ENCODE measurements at regions of chr5 and their contacts with region 1.

Region 1: DNA sequence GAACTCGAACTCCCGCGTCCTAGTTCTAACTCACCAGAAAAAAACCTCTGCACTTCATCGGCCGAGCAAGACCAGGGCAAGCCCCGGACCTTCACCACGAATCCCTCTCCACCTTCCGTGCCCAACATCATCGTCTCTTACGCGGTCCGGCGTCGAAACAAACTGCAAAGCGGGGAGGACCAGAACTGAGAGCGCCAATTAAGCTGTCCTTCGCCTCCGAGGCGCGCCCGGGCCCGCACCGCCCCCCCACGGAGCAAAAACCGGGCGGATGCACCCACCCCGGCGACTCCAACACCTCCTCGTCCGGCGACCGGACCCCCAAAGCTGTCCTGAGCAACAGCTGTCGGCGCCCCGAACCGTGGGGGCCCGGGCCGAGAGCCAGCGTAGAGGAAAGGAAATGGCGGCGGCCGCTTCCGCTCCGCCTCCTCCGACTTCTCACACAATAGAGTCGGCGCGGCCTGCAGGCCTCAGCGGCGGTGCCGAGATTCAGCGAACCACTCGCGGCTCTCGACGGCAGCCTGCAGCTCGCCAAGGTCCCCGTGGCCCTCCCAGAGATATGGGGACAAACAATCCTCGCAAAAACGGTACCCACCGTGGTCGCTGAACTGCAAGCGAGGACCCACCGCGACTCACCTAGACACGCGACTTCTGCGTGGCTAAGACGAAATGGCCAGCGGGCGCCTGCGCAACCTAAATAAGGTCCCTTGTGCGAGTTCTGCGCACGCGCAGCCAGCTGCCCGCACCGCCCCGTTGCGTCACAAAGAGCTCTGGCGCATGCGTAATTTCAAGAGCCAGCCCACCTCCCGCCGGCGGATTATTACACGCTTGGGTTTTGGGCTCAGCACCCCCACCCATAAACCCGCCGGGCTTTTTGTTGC is at the start of gene HNRNPH1:
- DNase-seq: peak; percentile 98 to 99
- ATAC-seq: peak; percentile 77 to 78
- H3K4me3 ChIP-seq: peak within 1 kb of the TSS; percentile 100
- H3K27ac ChIP-seq: peak within 1 kb of the TSS; percentile 98 to 100
- H3K4me1 ChIP-seq: peaks cover 22% of the 10 kb centered on the region
- CTCF ChIP-seq: peak; percentile 34
- EP300 ChIP-seq: no peak
- POLR2A ChIP-seq: peak; percentile 100
- RAD21 ChIP-seq: no peak
- polyA plus RNA-seq, gene HNRNPH1: 511 and 688 TPM in 2 replicates

Region 2: GRCh38 chr5:179559284-179560252 is 63.7 kb before region 1 on chr5:
- CTCF ChIA-PET with region 1: interaction called, 3 read pairs
- POLR2A ChIA-PET with region 1: interaction called, 23 read pairs
- DNase-seq: peak; percentile 99
- ATAC-seq: peak; percentile 99 to 100
- H3K4me3 ChIP-seq: peak overlapping the region; percentile 71
- H3K27ac ChIP-seq: peak overlapping the region; percentile 83 to 90
- H3K4me1 ChIP-seq: peaks cover 11% of the 10 kb centered on the region; the same call in 2 of the 3 replicates
- CTCF ChIP-seq: no peak
- EP300 ChIP-seq: no peak
- POLR2A ChIP-seq: peak; percentile 75
- RAD21 ChIP-seq: no peak

Region 3: DNA sequence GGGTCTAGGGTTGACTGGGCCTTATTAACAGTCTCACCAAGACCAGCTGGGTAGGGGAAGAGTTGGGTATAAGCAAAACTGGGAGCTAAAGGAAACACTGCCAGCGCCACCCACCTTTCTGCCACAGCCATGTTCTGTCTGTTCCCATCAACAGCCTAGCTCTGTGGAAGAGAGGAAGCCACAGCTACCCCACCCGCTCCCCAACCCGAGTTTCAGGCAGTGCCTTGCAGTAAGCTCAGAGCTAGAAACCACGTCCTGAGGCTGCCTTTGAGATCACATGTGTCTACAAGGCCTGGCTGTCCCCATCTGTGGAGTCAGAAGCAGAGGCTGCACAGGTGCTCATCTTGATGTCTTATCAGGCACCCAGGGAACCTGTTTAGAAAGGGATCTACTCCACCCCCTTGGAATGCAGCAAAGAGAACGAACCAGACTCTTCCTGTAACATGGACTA is 15.1 kb before region 1 on chr5:
- CTCF ChIA-PET with region 1: interaction called, 26 read pairs
- POLR2A ChIA-PET with region 1: interaction called, 125 read pairs
- DNase-seq: no peak
- ATAC-seq: peak; percentile 3; a peak in 5 of 6 replicates
- H3K4me3 ChIP-seq: no peak overlapping the region
- H3K27ac ChIP-seq: no peak overlapping the region
- H3K4me1 ChIP-seq: peaks cover 10% of the 10 kb centered on the region; the same call in 2 of the 3 replicates
- CTCF ChIP-seq: no peak
- EP300 ChIP-seq: no peak
- POLR2A ChIP-seq: no peak
- RAD21 ChIP-seq: no peak

Region 4: DNA sequence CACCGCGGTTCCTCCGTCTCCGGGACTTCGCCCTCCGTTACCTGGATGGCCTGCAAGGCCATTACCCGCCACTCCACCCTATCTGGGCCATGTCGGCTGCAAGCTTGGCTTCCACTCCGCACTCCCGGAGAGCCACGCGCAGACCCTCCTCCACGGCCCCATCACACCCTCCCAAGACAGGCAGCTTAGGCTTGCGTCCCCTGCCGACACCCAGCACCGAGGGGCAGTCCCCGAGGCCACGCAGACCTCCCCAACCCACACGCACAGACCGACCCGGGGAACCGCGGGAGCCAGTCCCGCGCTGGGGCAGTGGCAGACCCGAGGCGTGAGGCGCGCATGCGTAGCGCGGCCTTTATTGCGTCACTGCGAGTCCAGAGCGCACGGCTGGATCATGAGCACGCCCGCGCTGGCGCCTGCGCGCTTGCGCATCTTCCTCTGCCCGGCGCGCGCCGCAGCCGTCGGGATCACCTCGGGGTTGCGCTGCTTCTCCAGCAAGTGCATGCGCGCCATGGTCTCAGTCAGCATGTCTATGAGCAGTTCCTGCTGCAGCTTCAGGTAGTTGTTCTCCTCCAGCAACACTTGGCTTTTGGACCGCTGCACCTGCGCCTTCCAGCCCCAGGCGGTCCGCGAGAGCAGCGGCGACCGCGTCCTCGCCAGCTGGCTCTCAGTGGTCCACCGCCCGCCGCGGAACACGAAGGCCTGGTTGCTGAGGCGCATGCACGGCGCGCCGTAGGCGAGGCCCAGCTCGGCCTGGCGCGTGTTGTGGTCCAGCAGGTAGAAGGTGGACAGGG is 55.2 kb after region 1 on chr5:
- CTCF ChIA-PET with region 1: interaction called, 6 read pairs
- POLR2A ChIA-PET with region 1: interaction called, 15 read pairs
- DNase-seq: peak; percentile 89 to 96
- ATAC-seq: peak; percentile 88 to 94
- H3K4me3 ChIP-seq: peak overlapping the region; percentile 74
- H3K27ac ChIP-seq: peak overlapping the region; percentile 90 to 91
- H3K4me1 ChIP-seq: peaks cover 38% of the 10 kb centered on the region
- CTCF ChIP-seq: no peak
- EP300 ChIP-seq: no peak
- POLR2A ChIP-seq: peak; percentile 95
- RAD21 ChIP-seq: no peak

Region 5: DNA sequence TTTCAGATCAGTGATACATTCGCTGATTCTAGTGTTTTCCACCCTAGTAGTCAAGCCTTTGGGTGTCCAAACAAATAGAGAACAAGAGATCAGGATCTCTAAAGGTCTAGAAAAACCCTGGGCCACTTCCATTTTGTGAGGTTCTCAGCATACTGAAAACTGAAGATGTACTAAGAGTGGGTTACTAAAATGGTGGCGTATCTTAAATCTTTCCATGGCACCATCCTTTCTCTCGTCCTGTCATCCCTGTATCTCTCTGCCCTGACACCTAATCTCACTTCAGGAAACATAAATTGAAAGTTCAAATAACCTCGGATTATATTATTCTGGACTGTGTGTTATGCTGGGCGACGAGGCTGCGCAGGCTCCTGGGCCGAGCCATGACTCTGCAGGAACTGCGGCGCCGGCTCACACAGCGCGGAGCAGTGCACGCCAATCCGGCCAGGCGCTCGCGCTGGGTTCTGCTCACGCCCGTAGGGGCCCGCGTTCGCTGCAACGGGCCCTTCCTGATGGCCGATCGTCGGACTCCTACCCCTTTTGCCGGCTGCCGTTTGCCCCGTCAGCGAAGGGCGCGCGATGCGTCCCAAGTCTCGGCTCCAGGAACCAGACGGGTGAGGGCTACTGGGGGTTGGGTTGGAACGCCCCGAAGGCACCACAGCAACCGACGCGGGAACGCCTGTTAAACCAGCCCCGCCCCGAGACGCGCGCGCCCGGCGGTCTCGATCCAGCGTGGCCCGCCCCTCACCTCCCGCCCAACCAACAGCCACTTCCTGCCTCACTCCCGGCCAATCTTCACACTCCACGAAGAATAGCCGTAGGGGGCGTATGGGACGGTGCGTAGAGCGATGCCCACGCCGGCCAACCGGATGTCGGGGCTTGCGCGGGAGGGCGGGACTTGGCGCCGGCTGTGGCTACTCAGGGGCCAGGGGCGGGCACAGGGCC is 75.0 kb after region 1 on chr5:
- CTCF ChIA-PET with region 1: no interaction called
- POLR2A ChIA-PET with region 1: interaction called, 13 read pairs
- DNase-seq: peak; percentile 99
- ATAC-seq: peak; percentile 95
- H3K4me3 ChIP-seq: peak overlapping the region; percentile 97
- H3K27ac ChIP-seq: peak overlapping the region; percentile 98
- H3K4me1 ChIP-seq: peaks cover 12% of the 10 kb centered on the region; the same call in 1 of the 3 replicates
- CTCF ChIP-seq: no peak
- EP300 ChIP-seq: no peak
- POLR2A ChIP-seq: peak; percentile 93
- RAD21 ChIP-seq: 0 out of 5 replicates have a peak, but pooled peaks of 1 of the 2 experiments have one; percentile 14

Region 6: DNA sequence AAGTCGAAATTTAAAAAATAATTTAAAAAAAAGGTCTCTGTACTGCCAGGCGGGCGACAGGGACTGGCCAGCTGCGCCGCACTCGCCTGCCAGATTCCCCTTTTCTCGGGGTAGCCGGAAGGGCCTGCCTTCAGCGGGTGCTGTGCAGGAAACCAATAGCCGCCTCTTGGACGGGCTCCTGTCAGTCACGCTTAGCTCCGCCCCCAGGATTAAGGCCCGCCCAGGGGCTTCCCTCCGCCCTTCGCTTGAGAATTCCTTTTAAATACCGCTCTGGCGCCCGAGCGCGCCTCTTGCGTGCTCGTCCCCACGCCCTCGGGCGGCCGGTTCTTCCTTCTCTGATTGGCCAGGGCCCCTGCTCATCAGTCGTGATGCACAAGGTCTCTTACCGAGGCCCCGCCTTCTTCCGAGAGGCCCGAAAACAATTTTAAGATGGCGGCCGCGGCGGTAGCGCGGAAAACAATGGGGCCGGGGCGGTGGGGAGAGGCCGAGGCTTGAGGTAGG is 109.2 kb after region 1 on chr5 and contains the start of gene MAML1:
- CTCF ChIA-PET with region 1: no interaction called
- POLR2A ChIA-PET with region 1: interaction called, 10 read pairs
- DNase-seq: peak; percentile 94 to 100
- ATAC-seq: peak; percentile 95 to 97
- H3K4me3 ChIP-seq: peak within 1 kb of the TSS; percentile 69
- H3K27ac ChIP-seq: peak within 1 kb of the TSS; percentile 88 to 97
- H3K4me1 ChIP-seq: peaks cover 26% of the 10 kb centered on the region
- CTCF ChIP-seq: no peak
- EP300 ChIP-seq: no peak
- POLR2A ChIP-seq: peak; percentile 65
- RAD21 ChIP-seq: no peak
- polyA plus RNA-seq, gene MAML1: 6.9 and 10.9 TPM in 2 replicates

Region 7: GRCh38 chr5:179827680-179828079 is 204.4 kb after region 1 on chr5:
- CTCF ChIA-PET with region 1: no interaction called
- POLR2A ChIA-PET with region 1: no interaction called
- DNase-seq: peak in 1 of 2 experiments; percentile 50
- ATAC-seq: peak in 1 of 2 experiments; percentile 2; a peak in 3 of 6 replicates
- H3K4me3 ChIP-seq: no peak overlapping the region
- H3K27ac ChIP-seq: peak overlapping the region in 1 of 2 experiments; percentile 31; a peak in 1 of 6 replicates
- H3K4me1 ChIP-seq: peaks cover 92% of the 10 kb centered on the region
- CTCF ChIP-seq: no peak
- EP300 ChIP-seq: no peak
- POLR2A ChIP-seq: no peak
- RAD21 ChIP-seq: no peak